Naive thymus-derived CD4-positive, alpha-beta T cell (primary cell): ENCODE measurements at regions of chr11 and their contacts with region 1.

Region 1: GRCh38 chr11:112024773-112025678 is at the start of gene DLAT:
- DNase-seq: peak; percentile 66 to 87 (median 85)
- ATAC-seq: peak; percentile 95
- H3K4me3 ChIP-seq: peak within 1 kb of the TSS; percentile 100
- H3K4me3 Mint-ChIP-seq: peak within 1 kb of the TSS; percentile 97 to 100 (median 99)
- H3K27ac ChIP-seq: peak within 1 kb of the TSS; percentile 93
- H3K27ac Mint-ChIP-seq: peak within 1 kb of the TSS; percentile 96 to 100 (median 98)
- H3K4me1 ChIP-seq: peaks cover 0 to 7% of the 10 kb centered on the region in 2 donors
- H3K4me1 Mint-ChIP-seq: peaks cover 14 to 39% (median 30%) of the 10 kb centered on the region in 7 donors
- H3K27me3 ChIP-seq: no peaks in the 10 kb centered on the region
- H3K27me3 Mint-ChIP-seq: no peaks in the 10 kb centered on the region
- total RNA-seq, gene DLAT: 13.1 to 31.0 (median 17.8) TPM

Region 2: GRCh38 chr11:111819161-111819828 is 205.7 kb before region 1 on chr11:
- CTCF ChIA-PET with region 1: no interaction called
- POLR2A ChIA-PET with region 1: no interaction called
- intact Hi-C with region 1: no loop called
- DNase-seq: no peak
- ATAC-seq: no peak
- H3K4me3 ChIP-seq: no peak overlapping the region
- H3K4me3 Mint-ChIP-seq: no peak overlapping the region
- H3K27ac ChIP-seq: no peak overlapping the region
- H3K27ac Mint-ChIP-seq: peak overlapping the region in 2 of 9 donors; percentile 0 to 42
- H3K4me1 ChIP-seq: no peaks in the 10 kb centered on the region
- H3K4me1 Mint-ChIP-seq: peaks cover 0 to 6% (median 0%) of the 10 kb centered on the region in 7 donors
- H3K27me3 ChIP-seq: no peaks in the 10 kb centered on the region
- H3K27me3 Mint-ChIP-seq: no peaks in the 10 kb centered on the region

Region 3: DNA sequence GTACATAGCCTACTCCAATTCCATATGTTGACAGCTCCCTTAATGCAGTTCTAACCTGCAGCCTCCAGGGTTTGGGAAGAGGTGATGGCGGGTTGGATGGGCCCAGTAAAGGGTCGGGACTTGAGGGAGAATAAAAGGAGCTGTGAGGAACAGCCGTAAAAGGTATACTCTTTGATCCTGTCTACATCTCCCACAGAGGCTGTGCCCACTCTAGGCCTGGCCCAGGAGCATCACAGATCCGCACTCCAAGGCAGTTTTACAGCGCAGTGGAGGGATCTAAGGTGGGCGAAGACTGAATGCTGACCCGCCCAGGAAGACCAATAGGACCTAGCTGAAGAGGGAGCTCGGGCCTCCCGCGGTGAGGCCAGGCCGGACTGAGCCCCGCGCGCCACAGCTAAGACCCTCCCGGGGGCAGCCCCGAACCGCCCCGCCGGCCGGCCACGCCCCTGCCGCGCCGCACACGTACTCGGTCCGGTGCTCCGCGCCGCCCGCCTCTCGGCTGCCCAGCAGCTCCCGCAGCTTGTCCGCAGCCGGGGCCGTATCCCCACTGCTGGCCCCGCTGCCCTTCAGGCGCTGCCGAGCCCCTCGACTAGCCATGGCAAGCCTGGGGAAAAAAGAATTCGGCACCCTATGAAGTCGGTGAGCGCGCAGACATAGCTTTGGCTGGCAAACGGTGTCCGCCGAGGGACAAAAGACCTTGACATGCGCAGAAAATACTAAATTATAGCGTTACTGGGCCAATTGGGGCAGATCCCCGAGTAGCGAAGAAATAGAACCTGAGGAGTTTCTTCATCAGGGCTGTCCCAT is 153.9 kb before region 1 on chr11 and contains the start of gene ALG9:
- CTCF ChIA-PET with region 1: interaction called, 5 read pairs
- POLR2A ChIA-PET with region 1: interaction called, 3 read pairs
- intact Hi-C with region 1: loop called (anchors 2 kb)
- DNase-seq: peak; percentile 79 to 94 (median 88)
- ATAC-seq: peak; percentile 91
- H3K4me3 ChIP-seq: peak within 1 kb of the TSS; percentile 74
- H3K4me3 Mint-ChIP-seq: peak within 1 kb of the TSS; percentile 86 to 96 (median 93)
- H3K27ac ChIP-seq: peak within 1 kb of the TSS; percentile 91
- H3K27ac Mint-ChIP-seq: peak within 1 kb of the TSS; percentile 87 to 98 (median 94)
- H3K4me1 ChIP-seq: peaks cover 8 to 10% of the 10 kb centered on the region in 2 donors
- H3K4me1 Mint-ChIP-seq: peaks cover 9 to 41% (median 34%) of the 10 kb centered on the region in 7 donors
- H3K27me3 ChIP-seq: no peaks in the 10 kb centered on the region
- H3K27me3 Mint-ChIP-seq: no peaks in the 10 kb centered on the region
- total RNA-seq, gene ALG9: 16.4 to 30.2 (median 29.2) TPM

Region 4: GRCh38 chr11:111938687-111939160 is 86.3 kb before region 1 on chr11:
- CTCF ChIA-PET with region 1: interaction called, 3 read pairs
- POLR2A ChIA-PET with region 1: interaction called, 4 read pairs
- intact Hi-C with region 1: loop called (anchors 2 kb)
- DNase-seq: peak in 6 of 9 donors; percentile 18 to 38 (median 27)
- ATAC-seq: peak; percentile 73
- H3K4me3 ChIP-seq: no peak overlapping the region
- H3K4me3 Mint-ChIP-seq: peak overlapping the region; percentile 59 to 95 (median 78)
- H3K27ac ChIP-seq: peak overlapping the region; percentile 49
- H3K27ac Mint-ChIP-seq: peak overlapping the region; percentile 67 to 96 (median 84)
- H3K4me1 ChIP-seq: peaks cover 4 to 29% of the 10 kb centered on the region in 2 donors
- H3K4me1 Mint-ChIP-seq: peaks cover 16 to 48% (median 32%) of the 10 kb centered on the region in 7 donors
- H3K27me3 ChIP-seq: no peaks in the 10 kb centered on the region
- H3K27me3 Mint-ChIP-seq: no peaks in the 10 kb centered on the region

Region 5: DNA sequence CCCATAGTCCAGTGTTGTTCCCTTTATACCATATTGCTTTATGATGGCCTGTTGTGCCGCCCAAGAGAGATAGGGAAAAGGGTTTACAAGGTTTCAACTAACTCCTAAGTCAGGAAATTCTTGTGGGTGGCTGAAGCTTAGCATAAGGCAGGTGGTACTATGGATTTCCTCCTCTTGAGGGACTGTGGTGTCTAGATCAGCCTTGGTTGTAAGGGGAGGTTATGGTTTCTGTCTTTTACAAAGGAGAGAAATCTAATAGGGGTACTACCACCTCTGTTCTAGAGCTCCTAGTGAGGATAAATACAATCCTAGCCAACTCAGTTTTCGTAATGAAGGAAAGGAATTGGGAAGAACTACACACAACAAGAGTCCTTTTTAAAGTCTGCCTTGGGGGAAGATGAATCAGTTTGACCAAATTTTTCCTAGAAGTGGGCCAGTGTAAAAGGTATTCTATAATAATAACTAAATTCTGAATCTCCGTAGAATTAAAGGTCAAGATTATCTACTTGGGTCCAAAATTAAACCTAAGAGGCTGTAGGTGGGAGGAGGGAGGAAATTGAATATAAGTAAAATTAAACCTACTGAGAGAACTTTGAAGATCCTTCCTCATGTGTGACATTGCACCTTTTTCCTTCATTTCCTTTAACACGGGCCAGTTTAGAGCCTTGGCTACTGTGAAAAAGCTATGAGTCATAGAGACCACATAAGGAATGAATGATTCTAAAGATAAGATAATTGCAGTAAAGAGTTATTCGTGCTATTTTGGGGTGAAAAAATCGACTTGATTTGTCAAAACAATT is 17.3 kb after region 1 on chr11:
- CTCF ChIA-PET with region 1: no interaction called
- POLR2A ChIA-PET with region 1: no interaction called
- intact Hi-C with region 1: loop called in 1 of 2 experiments (anchors 2 kb)
- DNase-seq: no peak
- ATAC-seq: no peak
- H3K4me3 ChIP-seq: no peak overlapping the region
- H3K4me3 Mint-ChIP-seq: no peak overlapping the region
- H3K27ac ChIP-seq: no peak overlapping the region
- H3K27ac Mint-ChIP-seq: peak overlapping the region in 2 of 9 donors; percentile 27 to 52
- H3K4me1 ChIP-seq: no peaks in the 10 kb centered on the region
- H3K4me1 Mint-ChIP-seq: peaks cover 0 to 20% (median 5%) of the 10 kb centered on the region in 7 donors
- H3K27me3 ChIP-seq: no peaks in the 10 kb centered on the region
- H3K27me3 Mint-ChIP-seq: no peaks in the 10 kb centered on the region

Region 6: DNA sequence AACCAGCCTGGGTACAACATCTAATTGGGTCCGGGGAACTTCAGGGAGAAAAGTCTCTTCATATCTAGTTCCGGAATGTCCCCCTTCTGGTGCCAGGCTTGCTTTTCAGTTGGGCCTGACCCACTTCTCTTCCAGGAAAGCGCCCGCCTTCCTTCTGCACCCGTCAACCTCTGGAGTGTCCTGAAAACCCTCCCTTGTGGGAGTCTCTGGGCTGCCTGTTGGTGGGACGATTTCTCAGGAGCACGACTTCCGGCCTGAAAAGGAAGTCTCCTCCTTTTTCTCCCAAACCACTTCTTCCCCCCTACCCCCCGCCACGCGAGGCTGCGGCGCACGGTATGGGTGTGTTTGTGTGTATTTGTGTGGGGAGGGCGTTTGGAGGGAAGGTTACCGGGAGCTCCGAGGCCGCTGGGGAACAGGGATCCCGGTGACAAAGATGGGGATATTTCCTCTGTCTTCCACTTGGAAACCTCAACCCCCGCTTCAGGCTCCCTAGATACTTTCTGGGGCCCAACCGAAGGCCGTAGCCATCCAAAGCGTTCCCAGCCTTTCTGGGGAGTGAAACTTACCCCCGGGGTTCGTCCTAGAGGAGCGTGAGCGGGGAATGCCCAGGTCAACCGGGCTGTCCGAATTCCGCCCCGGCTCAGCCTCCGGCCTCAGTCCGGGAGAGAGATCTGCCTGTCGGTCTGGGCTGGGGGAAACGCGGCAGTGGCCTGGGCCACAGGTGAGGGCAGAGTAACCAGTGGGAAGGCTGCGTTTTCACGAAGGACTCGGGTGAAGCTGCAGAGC is 49.2 kb after region 1 on chr11 and contains the start of gene NKAPD1:
- CTCF ChIA-PET with region 1: no interaction called
- POLR2A ChIA-PET with region 1: no interaction called
- intact Hi-C with region 1: loop called (anchors 1 kb)
- DNase-seq: peak; percentile 64 to 88 (median 84)
- ATAC-seq: peak; percentile 94
- H3K4me3 ChIP-seq: peak within 1 kb of the TSS; percentile 97
- H3K4me3 Mint-ChIP-seq: peak within 1 kb of the TSS; percentile 80 to 98 (median 94)
- H3K27ac ChIP-seq: peak within 1 kb of the TSS; percentile 79
- H3K27ac Mint-ChIP-seq: peak within 1 kb of the TSS; percentile 84 to 96 (median 95)
- H3K4me1 ChIP-seq: peaks cover 5 to 11% of the 10 kb centered on the region in 2 donors
- H3K4me1 Mint-ChIP-seq: peaks cover 14 to 49% (median 40%) of the 10 kb centered on the region in 7 donors
- H3K27me3 ChIP-seq: no peaks in the 10 kb centered on the region
- H3K27me3 Mint-ChIP-seq: peaks cover 6 to 22% (median 12%) of the 10 kb centered on the region in 5 donors
- total RNA-seq, gene NKAPD1: 12.4 to 22.9 (median 19.7) TPM

Region 7: DNA sequence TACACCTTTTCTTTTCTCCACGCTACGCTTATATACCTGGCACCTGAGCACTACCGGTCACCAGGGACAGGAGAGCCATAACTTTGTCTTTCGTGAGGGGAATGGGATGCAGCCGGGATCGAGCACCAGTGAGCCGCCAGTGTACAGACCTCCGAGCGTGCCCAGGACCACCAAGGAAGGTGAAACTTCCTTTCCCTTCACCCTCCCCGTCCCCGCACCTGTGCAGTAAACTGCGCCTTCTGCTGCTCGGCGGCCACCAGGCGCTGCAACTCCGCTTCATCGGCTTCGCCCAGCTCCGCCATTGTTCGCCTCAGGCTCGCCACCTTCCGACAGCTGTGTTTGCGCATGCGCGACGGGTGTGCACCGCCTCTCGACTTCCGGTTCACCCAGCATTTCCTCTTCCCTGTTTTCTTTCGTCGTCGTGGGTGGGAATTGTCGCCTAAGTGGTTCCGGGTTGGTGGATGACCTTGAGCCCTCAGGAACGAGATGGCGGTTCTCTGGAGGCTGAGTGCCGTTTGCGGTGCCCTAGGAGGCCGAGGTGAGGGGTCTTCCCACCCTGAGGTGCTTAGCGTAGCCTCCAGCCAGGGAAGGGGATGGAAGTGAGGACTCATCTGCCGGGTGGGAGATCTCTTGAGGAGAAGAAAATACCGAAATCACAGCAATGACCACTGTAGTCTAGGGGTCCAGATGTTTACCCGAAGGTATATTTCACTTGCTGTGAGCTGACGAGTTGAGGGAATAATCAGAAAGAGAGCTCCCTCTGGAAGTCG is 61.6 kb after region 1 on chr11 and contains the starts of genes SDHD and TIMM8B:
- CTCF ChIA-PET with region 1: no interaction called
- POLR2A ChIA-PET with region 1: interaction called, 3 read pairs
- intact Hi-C with region 1: loop called (anchors 1 kb)
- DNase-seq: peak; percentile 90 to 98 (median 97)
- ATAC-seq: peak; percentile 94
- H3K4me3 ChIP-seq: peak within 1 kb of the TSS; percentile 99
- H3K4me3 Mint-ChIP-seq: peak within 1 kb of the TSS; percentile 90 to 100 (median 98)
- H3K27ac ChIP-seq: peak within 1 kb of the TSS; percentile 76
- H3K27ac Mint-ChIP-seq: peak within 1 kb of the TSS; percentile 92 to 99 (median 96)
- H3K4me1 ChIP-seq: peaks cover 21 to 23% of the 10 kb centered on the region in 2 donors
- H3K4me1 Mint-ChIP-seq: peaks cover 44 to 69% (median 62%) of the 10 kb centered on the region in 7 donors
- H3K27me3 ChIP-seq: no peaks in the 10 kb centered on the region
- H3K27me3 Mint-ChIP-seq: peaks cover 0 to 2% (median 0%) of the 10 kb centered on the region in 5 donors
- total RNA-seq, gene SDHD: 39.6 to 84.4 (median 65.8) TPM
- total RNA-seq, gene TIMM8B: 15.5 to 61.1 (median 24.3) TPM